PC-9 (cell line): ENCODE measurements at regions of chr16 and their contacts with region 1.

Region 1: GRCh38 chr16:67806428-67807147 is at the starts of genes RANBP10 and TSNAXIP1:
- DNase-seq: peak; percentile 96 to 98
- H3K4me3 ChIP-seq: peak within 1 kb of the TSS; percentile 86
- H3K27ac ChIP-seq: no peak within 1 kb of the TSS
- H3K4me1 ChIP-seq: peaks cover 14% of the 10 kb centered on the region
- H3K27me3 ChIP-seq: no peaks in the 10 kb centered on the region
- CTCF ChIP-seq: no peak
- total RNA-seq, gene RANBP10: 16.1 and 21.0 TPM in 2 replicates
- total RNA-seq, gene TSNAXIP1: 1.9 and 2.2 TPM in 2 replicates

Region 2: DNA sequence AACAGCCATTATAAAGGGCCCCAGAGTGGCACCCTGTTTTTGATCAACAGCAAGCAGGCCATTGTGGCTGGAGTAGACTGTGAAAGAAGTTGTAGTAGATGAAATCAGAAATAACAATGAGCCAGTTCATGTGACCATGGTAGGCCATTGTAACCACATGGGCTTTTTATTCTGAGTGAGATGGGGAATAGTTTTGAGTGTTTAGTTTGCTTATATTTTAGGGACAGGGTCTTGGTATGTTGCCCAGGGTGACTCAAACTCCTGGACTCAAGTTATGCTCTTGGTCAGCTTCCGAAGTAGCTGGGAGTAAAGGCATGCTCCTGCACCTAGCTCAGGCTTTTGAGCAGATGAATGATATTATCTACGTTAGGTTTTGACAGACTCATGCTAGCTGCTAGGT is 765.7 kb before region 1 on chr16:
- CTCF ChIA-PET with region 1: interaction called, 11 read pairs
- POLR2A ChIA-PET with region 1: no interaction called
- intact Hi-C with region 1: no loop called
- DNase-seq: no peak
- H3K4me3 ChIP-seq: no peak overlapping the region
- H3K27ac ChIP-seq: no peak overlapping the region
- H3K4me1 ChIP-seq: no peaks in the 10 kb centered on the region
- H3K27me3 ChIP-seq: no peaks in the 10 kb centered on the region
- CTCF ChIP-seq: no peak

Region 3: DNA sequence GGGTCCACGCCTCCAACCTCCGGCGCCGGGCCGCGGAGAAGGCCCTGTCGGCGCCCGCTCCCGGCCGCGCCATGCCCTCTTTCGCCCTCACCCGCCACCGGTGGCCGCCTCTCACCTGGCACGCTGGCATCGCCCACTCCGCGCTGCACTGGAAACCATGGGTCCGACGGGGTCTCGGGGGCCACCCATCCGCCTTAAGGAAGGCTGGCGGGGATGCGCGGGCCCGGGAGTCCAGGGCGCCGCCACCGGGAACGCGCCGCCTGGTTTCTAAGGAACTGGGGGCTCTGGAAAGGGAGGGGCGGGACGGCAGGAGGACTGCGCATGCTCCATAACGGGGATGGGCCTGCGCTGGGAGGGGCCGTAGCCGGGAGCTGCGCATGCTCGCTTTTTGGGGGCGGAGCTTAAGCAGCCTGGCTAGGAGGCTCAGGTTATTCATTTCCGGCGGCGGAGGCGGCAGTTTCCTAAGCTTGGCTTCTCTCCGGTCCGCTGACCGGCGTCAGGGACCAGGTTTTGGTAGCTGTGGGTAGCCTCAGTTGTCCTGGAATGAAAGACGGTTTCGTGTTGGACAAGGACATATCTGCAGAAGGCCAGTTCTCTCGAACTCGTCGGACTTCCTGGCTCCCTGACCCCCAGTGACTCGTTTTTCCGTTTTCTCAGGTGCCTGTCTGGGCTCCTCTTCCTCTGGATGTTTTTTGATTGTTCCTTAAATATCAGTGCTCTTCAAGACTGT is 87.4 kb before region 1 on chr16 and contains the start of gene GFOD2:
- CTCF ChIA-PET with region 1: no interaction called
- POLR2A ChIA-PET with region 1: interaction called, 4 read pairs
- intact Hi-C with region 1: loop called (anchors 1 kb)
- DNase-seq: peak; percentile 77 to 96
- H3K4me3 ChIP-seq: peak within 1 kb of the TSS; percentile 71
- H3K27ac ChIP-seq: 0 out of 2 replicates have a peak within 1 kb of the TSS, but pooled peaks have one; percentile 4
- H3K4me1 ChIP-seq: peaks cover 24% of the 10 kb centered on the region
- H3K27me3 ChIP-seq: no peaks in the 10 kb centered on the region
- CTCF ChIP-seq: no peak
- total RNA-seq, gene GFOD2: 17.6 and 20.4 TPM in 2 replicates

Region 4: GRCh38 chr16:67883872-67884261 is 77.3 kb after region 1 on chr16:
- CTCF ChIA-PET with region 1: no interaction called
- POLR2A ChIA-PET with region 1: interaction called, 10 read pairs
- intact Hi-C with region 1: no loop called
- DNase-seq: peak in 1 of 2 experiments; percentile 67
- H3K4me3 ChIP-seq: no peak overlapping the region
- H3K27ac ChIP-seq: no peak overlapping the region
- H3K4me1 ChIP-seq: no peaks in the 10 kb centered on the region
- H3K27me3 ChIP-seq: no peaks in the 10 kb centered on the region
- CTCF ChIP-seq: peak; percentile 92

Region 5: DNA sequence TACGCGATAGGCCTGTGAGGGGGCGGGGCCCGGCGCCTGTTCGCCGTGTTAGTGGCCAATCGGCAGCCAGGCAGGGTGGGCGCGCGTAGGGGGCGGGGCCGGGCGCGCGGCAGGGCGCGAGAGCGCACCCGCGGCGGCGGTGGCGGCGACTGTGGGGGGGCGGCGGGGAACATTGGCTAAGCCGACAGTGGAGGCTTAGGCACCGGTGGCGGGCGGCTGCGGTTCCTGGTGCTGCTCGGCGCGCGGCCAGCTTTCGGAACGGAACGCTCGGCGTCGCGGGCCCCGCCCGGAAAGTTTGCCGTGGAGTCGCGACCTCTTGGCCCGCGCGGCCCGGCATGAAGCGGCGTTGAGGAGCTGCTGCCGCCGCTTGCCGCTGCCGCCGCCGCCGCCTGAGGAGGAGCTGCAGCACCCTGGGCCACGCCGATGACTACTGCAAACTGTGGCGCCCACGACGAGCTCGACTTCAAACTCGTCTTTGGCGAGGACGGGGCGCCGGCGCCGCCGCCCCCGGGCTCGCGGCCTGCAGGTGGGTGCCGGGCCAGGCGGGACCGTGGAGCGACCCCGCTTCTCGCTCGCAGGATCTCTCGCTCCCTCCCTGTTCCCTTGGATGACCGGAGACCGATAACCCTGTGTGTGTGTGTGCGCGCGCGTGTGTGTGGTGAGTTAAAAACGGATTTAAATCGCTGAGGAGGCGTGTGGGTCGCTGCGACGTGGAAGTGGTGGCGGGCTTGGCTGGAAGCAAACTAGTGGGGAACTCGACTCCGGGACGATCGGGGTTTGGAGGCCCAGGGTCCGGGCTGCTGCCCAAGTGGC is 278.9 kb after region 1 on chr16 and contains the start of gene NFATC3:
- CTCF ChIA-PET with region 1: no interaction called
- POLR2A ChIA-PET with region 1: no interaction called
- intact Hi-C with region 1: loop called (anchors 1 kb)
- DNase-seq: peak; percentile 89 to 96
- H3K4me3 ChIP-seq: peak within 1 kb of the TSS; percentile 91
- H3K27ac ChIP-seq: peak within 1 kb of the TSS; percentile 51
- H3K4me1 ChIP-seq: peaks cover 14% of the 10 kb centered on the region
- H3K27me3 ChIP-seq: no peaks in the 10 kb centered on the region
- CTCF ChIP-seq: no peak
- total RNA-seq, gene NFATC3: 37.2 and 43.7 TPM in 2 replicates

Region 6: DNA sequence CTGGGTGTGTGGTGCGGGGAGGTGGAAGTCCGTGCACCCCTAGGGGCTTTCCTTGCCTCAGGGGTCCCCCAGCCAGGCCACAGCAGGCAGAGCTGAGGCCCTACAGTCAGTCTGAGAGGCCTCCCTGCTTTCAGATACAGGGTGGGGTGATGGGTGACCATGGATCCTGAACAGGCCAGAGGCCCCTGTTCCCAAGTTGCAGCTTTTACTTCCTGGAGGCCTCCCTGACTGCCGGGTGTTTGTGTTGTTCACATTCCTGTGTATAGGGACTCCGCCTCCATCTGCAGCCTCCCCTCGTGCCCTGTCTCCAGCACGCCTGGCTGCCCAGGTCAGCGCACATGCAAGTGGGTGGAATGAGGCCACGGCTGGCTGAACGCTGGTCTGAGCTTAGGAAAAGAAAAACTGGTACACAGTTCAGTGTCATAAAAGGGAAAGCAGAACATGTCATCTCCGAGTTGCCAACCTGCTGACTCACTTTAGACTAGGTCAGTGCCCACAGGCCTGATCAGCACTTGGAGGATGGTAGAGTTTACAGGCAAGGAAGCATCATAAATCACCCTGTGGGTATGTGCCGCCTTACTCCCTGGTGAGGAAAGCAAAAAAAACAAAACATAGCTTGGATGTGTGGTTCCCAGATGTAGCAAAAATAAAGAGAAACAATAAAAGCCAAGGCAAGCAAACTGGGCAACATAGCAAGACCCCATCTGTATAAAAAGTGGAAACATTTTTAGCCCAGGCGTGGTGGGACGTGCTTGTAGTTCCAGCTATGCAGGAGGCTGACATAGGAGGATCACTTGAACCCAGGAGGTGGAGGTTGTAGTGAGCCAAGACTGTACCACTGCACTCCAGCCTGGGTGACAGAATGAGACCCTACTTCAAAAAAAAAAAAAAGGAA is 451.6 kb after region 1 on chr16:
- CTCF ChIA-PET with region 1: no interaction called
- POLR2A ChIA-PET with region 1: no interaction called
- intact Hi-C with region 1: no loop called
- DNase-seq: peak; percentile 80 to 96
- H3K4me3 ChIP-seq: no peak overlapping the region
- H3K27ac ChIP-seq: peak overlapping the region; percentile 73
- H3K4me1 ChIP-seq: peaks cover 29% of the 10 kb centered on the region
- H3K27me3 ChIP-seq: no peaks in the 10 kb centered on the region
- CTCF ChIP-seq: no peak